ENCODE measurements at regions of chr2 and their contacts with region 1.

Region 1: DNA sequence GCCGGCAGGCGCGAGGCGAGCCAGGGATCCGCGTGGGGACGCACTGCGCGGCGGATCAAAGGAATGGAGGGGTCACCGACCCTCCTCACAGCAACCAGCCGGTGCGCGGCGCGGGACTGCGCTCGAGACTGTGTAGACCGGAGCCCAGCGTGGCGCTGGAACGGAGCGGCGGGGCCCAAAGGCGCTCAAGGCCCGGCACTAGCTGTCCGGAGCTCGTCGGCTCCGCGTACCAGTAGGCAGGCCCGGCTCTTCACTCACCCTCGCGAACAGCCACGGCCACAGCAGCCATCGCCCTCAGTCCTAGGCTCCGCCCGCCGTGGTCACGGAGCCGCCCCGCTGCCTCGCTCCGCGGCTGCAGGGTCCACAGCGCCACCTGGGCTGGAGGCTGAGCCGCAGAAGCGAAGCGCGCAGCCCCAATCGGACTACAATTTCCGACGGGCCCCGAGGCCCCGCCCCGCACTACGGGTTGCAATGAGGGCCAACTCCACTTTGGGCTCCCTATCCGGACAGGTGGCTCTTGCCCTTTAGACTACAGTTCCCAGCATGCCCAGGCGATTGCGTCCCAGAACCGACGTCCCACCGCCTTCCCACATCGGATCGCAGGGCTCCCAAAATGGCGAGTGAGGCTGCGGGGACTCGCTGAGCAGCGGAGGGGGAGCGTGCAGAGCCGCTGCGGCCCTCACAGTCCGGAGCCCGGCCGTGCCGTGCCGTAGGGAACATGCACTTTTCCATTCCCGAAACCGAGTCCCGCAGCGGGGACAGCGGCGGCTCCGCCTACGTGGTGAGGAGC is at the starts of genes EIF2B4 and SNX17:
- DNase-seq: peak; percentile 99
- ATAC-seq: peak; percentile 93
- H3K4me3 Mint-ChIP-seq: peak within 1 kb of the TSS; percentile 89
- H3K27ac Mint-ChIP-seq: peak within 1 kb of the TSS; percentile 95
- H3K4me1 Mint-ChIP-seq: peaks cover 28% of the 10 kb centered on the region
- H3K27me3 Mint-ChIP-seq: no peaks in the 10 kb centered on the region
- CTCF ChIP-seq: peak; percentile 68
- total RNA-seq, gene EIF2B4: 29.2 to 30.4 TPM
- total RNA-seq, gene SNX17: 74.5 to 82.3 TPM

Region 2: DNA sequence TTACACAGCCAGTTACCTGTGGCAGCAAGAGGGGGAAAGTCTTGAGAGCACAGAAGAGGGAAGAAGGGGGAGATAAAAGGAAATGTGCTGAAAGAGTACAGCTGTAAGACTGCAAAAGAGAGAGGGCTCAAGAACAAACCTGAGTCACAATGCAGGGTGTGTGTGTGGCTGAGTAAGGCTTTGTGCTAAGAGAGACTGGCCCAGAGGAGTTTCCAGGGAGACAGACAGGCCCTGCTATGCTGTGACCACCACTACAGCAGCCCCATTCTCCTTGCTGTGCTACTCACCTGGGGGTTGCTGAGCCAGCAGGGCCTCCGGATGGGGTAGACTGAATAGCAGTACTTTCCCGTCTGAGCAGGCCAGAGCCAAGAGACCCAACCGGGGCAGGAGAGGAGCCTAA is 34.9 kb before region 1 on chr2:
- CTCF ChIA-PET with region 1: no interaction called
- POLR2A ChIA-PET with region 1: no interaction called
- intact Hi-C with region 1: no loop called
- DNase-seq: no peak
- ATAC-seq: no peak
- H3K4me3 Mint-ChIP-seq: no peak overlapping the region
- H3K27ac Mint-ChIP-seq: no peak overlapping the region
- H3K4me1 Mint-ChIP-seq: no peaks in the 10 kb centered on the region
- H3K27me3 Mint-ChIP-seq: no peaks in the 10 kb centered on the region
- CTCF ChIP-seq: no peak

Region 3: DNA sequence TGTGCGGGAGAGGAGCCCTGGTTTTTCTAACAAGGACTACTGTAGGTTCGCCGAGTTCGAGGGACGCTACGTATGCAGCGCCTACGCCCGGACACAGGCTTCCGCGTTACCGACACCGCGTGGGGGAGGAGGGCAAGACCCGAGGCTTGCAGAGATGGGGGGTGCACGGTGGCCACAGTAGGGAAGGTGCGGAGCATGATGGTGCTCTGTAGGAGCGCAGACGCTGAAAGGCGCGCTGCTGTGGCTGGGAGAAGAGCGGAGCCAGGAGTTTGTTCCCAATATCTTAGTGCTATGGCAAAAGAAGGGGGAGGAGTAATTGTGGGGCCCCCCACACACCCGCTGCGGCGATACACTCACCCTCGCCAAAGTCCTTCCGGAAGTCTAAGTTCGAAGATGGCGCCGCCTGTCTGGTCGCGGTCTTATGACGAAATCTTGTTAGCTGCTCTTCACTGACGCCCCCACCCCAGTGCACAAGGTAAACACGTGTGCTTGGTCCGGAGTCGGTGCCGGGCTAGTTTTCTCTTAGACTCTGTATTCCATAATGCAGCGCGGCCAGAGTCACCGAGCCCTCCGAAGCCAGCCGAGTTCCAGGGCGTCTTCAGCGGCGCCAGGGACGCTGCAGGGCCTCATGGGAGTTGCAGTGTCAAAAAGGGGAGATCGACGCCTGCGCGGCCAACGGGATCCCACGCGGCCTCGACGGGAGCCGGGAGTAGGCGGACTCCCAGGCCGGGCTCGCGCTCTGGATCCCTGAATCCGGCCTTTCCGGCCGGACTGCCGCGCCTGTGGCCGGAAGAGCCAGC is 13.6 kb before region 1 on chr2 and contains the start of gene GTF3C2:
- CTCF ChIA-PET with region 1: interaction called, 15 read pairs
- POLR2A ChIA-PET with region 1: interaction called, 84 read pairs
- intact Hi-C with region 1: loop called (anchors 2 kb)
- DNase-seq: peak; percentile 98
- ATAC-seq: peak; percentile 79
- H3K4me3 Mint-ChIP-seq: peak within 1 kb of the TSS; percentile 94
- H3K27ac Mint-ChIP-seq: peak within 1 kb of the TSS; percentile 99
- H3K4me1 Mint-ChIP-seq: peaks cover 48% of the 10 kb centered on the region
- H3K27me3 Mint-ChIP-seq: no peaks in the 10 kb centered on the region
- CTCF ChIP-seq: no peak
- total RNA-seq, gene GTF3C2: 57.6 to 63.6 TPM

Region 4: DNA sequence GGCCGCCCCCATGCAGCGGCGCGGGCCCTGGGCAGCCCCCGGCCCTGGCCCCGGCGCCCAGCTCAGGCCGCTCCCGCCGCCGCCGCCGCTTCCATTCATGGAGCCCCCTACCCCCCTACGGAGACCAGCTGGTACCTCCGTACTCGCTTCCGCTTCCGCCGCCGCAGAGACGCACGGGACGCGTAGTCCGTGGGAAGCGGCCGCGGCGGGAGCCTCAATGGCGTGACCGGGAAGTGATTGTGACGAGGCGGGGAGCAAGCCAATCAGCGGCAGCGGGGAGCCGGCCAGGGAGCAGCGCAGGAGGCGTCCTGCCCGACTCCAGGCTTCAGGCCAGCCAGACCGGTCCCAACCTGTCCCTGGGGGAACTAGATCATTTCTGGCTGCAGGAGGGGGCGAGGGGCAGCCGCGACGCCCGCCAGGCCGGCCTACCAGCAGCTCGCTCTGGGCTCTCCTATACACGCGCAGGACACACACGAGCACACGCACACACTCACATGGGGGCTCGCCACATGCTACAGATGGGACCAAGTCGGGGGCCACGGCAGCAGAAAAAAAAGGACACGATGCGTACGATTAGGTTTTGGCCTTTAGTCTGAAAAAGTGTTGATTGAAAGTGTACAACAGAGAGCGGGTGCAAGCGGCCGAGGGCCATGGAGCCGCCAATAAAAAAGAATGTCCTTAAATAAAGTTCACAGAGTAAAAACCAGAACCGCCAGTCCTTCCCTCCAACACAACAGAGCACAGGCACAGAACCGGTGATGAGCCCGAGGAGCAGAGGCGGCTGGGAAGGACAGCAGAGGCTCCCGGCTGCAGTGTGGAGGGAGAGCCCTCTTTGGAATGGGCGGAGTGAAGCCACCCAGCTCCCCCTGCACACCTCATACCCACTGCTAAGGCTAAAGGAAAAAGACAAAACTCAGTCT is 10.7 kb after region 1 on chr2 and contains the start of gene ZNF513:
- CTCF ChIA-PET with region 1: interaction called, 10 read pairs
- POLR2A ChIA-PET with region 1: interaction called, 59 read pairs
- intact Hi-C with region 1: no loop called
- DNase-seq: peak; percentile 92
- ATAC-seq: peak; percentile 90
- H3K4me3 Mint-ChIP-seq: peak within 1 kb of the TSS; percentile 81
- H3K27ac Mint-ChIP-seq: peak within 1 kb of the TSS; percentile 97
- H3K4me1 Mint-ChIP-seq: peaks cover 24% of the 10 kb centered on the region
- H3K27me3 Mint-ChIP-seq: no peaks in the 10 kb centered on the region
- CTCF ChIP-seq: no peak
- total RNA-seq, gene ZNF513: 6.8 to 7.2 TPM

Region 5: GRCh38 chr2:27409321-27410073 is 39.3 kb after region 1 on chr2 and contains the start of gene PPM1G:
- CTCF ChIA-PET with region 1: interaction called, 3 read pairs
- POLR2A ChIA-PET with region 1: interaction called, 20 read pairs
- intact Hi-C with region 1: no loop called
- DNase-seq: peak; percentile 96
- ATAC-seq: peak; percentile 98
- H3K4me3 Mint-ChIP-seq: peak within 1 kb of the TSS; percentile 86
- H3K27ac Mint-ChIP-seq: peak within 1 kb of the TSS; percentile 90
- H3K4me1 Mint-ChIP-seq: peaks cover 36% of the 10 kb centered on the region
- H3K27me3 Mint-ChIP-seq: peaks cover 2% of the 10 kb centered on the region
- CTCF ChIP-seq: no peak
- total RNA-seq, gene PPM1G: 138 to 142 TPM

Region 6: GRCh38 chr2:27428213-27428977 is 58.2 kb after region 1 on chr2 and contains the start of gene NRBP1:
- CTCF ChIA-PET with region 1: interaction called, 10 read pairs
- POLR2A ChIA-PET with region 1: interaction called, 13 read pairs
- intact Hi-C with region 1: no loop called
- DNase-seq: peak; percentile 93
- ATAC-seq: peak; percentile 87
- H3K4me3 Mint-ChIP-seq: peak within 1 kb of the TSS; percentile 98
- H3K27ac Mint-ChIP-seq: peak within 1 kb of the TSS; percentile 97
- H3K4me1 Mint-ChIP-seq: peaks cover 21% of the 10 kb centered on the region
- H3K27me3 Mint-ChIP-seq: no peaks in the 10 kb centered on the region
- CTCF ChIP-seq: no peak
- total RNA-seq, gene NRBP1: 60.5 to 62.1 TPM

Region 7: GRCh38 chr2:27606611-27607010 is 236.4 kb after region 1 on chr2:
- CTCF ChIA-PET with region 1: no interaction called
- POLR2A ChIA-PET with region 1: no interaction called
- intact Hi-C with region 1: no loop called
- DNase-seq: no peak
- ATAC-seq: no peak
- H3K4me3 Mint-ChIP-seq: no peak overlapping the region
- H3K27ac Mint-ChIP-seq: no peak overlapping the region
- H3K4me1 Mint-ChIP-seq: peaks cover 4% of the 10 kb centered on the region
- H3K27me3 Mint-ChIP-seq: no peaks in the 10 kb centered on the region
- CTCF ChIP-seq: no peak